MCF 10A (cell line): ENCODE measurements at regions of chr1 and their contacts with region 1.

Region 1: GRCh38 chr1:114131526-114132220 is 22.0 kb downstream of the SYT6 start:
- DNase-seq: peak; percentile 24
- H3K4me3 Mint-ChIP-seq: no peak overlapping the region
- H3K27ac Mint-ChIP-seq: no peak overlapping the region
- H3K4me1 Mint-ChIP-seq: no peaks in the 10 kb centered on the region
- H3K27me3 Mint-ChIP-seq: peaks cover 68% of the 10 kb centered on the region
- CTCF ChIP-seq: no peak

Region 2: DNA sequence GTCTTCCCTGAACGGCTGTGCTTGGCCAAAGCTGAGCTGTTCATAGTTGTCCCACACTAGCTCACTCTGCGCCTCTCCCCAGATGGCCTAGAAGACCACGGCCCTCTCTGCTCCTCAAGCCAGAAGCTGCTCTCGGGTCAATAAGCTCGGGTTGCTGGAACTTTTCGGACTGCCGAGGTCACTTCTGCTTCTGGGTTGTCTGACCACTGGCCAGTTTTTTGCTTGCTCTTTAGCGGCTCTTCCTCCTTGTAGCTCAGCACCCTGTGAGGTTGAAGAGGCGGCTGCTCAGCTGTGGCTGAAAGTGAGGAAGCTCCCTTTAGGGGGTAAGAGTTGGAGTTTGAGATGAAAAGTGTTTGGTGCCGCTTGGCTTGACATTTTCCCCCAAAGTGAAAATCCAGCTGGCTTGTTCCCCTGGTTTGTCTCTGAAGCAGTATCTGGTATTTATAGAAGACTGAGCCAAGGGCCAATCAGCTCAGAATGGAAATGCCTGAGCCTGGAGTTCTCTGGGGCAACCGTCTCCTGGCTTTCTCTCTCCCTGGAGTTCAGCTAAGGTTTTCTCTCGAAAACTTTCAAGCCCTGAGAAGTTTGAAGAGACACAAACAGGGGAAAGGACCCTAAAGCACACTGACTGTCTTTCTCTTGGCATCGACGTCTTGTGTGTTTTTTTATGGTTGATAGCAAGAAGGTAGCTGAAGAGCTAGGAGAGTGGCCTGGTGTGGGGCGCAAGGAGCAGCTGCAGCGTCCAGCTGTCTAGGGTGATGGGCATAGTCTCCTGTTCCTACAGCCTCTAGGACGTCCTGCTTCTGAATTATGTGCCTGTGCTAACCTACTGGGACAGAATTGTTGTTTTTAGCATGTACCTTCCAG is 50.0 kb before region 1 on chr1:
- CTCF ChIA-PET with region 1: no interaction called
- POLR2A ChIA-PET with region 1: no interaction called
- intact Hi-C with region 1: no loop called
- DNase-seq: no peak
- H3K4me3 Mint-ChIP-seq: no peak overlapping the region
- H3K27ac Mint-ChIP-seq: no peak overlapping the region
- H3K4me1 Mint-ChIP-seq: no peaks in the 10 kb centered on the region
- H3K27me3 Mint-ChIP-seq: peaks cover 30% of the 10 kb centered on the region
- CTCF ChIP-seq: no peak

Region 3: DNA sequence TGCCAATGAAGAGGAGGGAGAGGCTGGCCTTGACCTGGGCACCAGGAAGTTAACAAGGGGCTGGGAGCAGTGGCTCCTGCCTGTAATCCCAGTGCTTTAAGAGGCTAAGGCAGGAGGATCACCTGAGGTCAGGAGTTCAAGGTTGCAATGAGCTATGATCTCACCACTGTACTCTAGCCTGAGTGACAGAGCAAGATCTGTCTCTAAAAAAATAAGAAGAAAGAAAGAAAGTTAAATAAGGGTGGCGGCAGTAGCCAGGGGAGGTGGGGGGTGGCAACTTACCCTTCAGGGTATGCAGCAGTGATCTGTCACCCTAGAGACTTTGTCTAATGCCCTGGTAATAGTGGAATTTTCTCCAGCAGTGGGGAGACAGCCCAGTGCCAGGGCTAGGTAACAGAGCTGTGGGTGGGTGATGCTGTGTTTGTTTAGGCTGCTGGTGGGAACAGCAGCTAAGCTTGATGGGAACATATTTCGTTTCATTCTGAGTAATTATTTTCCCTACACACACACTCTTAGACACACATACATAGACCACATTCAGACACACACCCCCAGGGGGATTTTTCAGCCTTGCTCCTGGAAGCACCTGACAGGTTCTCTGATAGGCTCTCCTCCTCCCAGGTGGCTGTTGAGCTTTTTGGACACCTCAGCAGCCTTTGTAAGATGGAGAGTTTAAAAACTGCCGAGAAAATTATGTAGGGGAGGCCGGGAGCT is 33.3 kb after region 1 on chr1:
- CTCF ChIA-PET with region 1: no interaction called
- POLR2A ChIA-PET with region 1: no interaction called
- intact Hi-C with region 1: loop called (anchors 2 kb)
- DNase-seq: no peak
- H3K4me3 Mint-ChIP-seq: no peak overlapping the region
- H3K27ac Mint-ChIP-seq: no peak overlapping the region
- H3K4me1 Mint-ChIP-seq: no peaks in the 10 kb centered on the region
- H3K27me3 Mint-ChIP-seq: peaks cover 65% of the 10 kb centered on the region
- CTCF ChIP-seq: no peak